ENCODE measurements at regions of chr19 and their contacts with region 1.

Region 1: DNA sequence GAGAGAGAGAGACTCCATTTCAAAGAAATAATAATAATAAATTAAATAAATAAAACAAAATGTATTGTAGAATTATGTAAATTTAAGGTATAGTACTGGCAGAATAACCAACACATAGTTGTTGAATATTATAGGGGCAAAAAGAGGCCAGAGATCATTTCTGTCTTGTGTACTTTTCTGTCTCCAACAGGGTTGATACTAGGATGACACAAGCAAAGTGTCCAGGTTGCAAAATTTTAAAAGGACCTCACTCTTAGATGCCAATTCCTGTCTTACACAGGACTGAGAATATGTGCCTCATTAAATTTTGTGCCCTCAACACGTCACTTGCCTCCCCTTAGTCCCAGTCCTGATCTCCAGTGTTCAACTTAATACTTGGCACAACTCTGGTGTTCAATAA is 2.2 kb upstream of the AP2S1 start:
- DNase-seq: no peak
- H3K4me3 Mint-ChIP-seq: no peak overlapping the region
- H3K27ac Mint-ChIP-seq: no peak overlapping the region
- H3K4me1 Mint-ChIP-seq: peaks cover 24% of the 10 kb centered on the region
- H3K27me3 Mint-ChIP-seq: no peaks in the 10 kb centered on the region
- CTCF ChIP-seq: no peak

Region 2: GRCh38 chr19:46466536-46467196 is 386.2 kb before region 1 on chr19:
- CTCF ChIA-PET with region 1: interaction called, 13 read pairs
- intact Hi-C with region 1: no loop called
- DNase-seq: no peak
- H3K4me3 Mint-ChIP-seq: no peak overlapping the region
- H3K27ac Mint-ChIP-seq: no peak overlapping the region
- H3K4me1 Mint-ChIP-seq: no peaks in the 10 kb centered on the region
- H3K27me3 Mint-ChIP-seq: peaks cover 79% of the 10 kb centered on the region
- CTCF ChIP-seq: no peak

Region 3: GRCh38 chr19:46648060-46648960 is 204.5 kb before region 1 on chr19:
- CTCF ChIA-PET with region 1: no interaction called
- intact Hi-C with region 1: no loop called
- DNase-seq: no peak
- H3K4me3 Mint-ChIP-seq: no peak overlapping the region
- H3K27ac Mint-ChIP-seq: no peak overlapping the region
- H3K4me1 Mint-ChIP-seq: no peaks in the 10 kb centered on the region
- H3K27me3 Mint-ChIP-seq: peaks cover 70% of the 10 kb centered on the region
- CTCF ChIP-seq: no peak

Measured in Calu3 (cell line).